ENCODE measurements at regions of chr16 and their contacts with region 1.

Region 1: GRCh38 chr16:15777533-15778203 is 79.2 kb downstream of the MYH11 start:
- DNase-seq: peak; percentile 61
- CTCF ChIP-seq: no peak

Region 2: GRCh38 chr16:15672514-15673167 is 105.0 kb before region 1 on chr16:
- in situ Hi-C with region 1: no loop called
- DNase-seq: no peak
- CTCF ChIP-seq: no peak

Region 3: GRCh38 chr16:15874745-15875314 is 97.2 kb after region 1 on chr16:
- in situ Hi-C with region 1: no loop called
- DNase-seq: no peak
- CTCF ChIP-seq: peak; percentile 42

Region 4: GRCh38 chr16:15949210-15950160 is 171.8 kb after region 1 on chr16 and contains the start of gene ABCC1:
- in situ Hi-C with region 1: no loop called
- DNase-seq: peak; percentile 90
- CTCF ChIP-seq: no peak

Region 5: GRCh38 chr16:16137056-16137455 is 359.4 kb after region 1 on chr16:
- in situ Hi-C with region 1: loop called (anchors 10 kb)
- DNase-seq: no peak
- CTCF ChIP-seq: no peak

Region 6: DNA sequence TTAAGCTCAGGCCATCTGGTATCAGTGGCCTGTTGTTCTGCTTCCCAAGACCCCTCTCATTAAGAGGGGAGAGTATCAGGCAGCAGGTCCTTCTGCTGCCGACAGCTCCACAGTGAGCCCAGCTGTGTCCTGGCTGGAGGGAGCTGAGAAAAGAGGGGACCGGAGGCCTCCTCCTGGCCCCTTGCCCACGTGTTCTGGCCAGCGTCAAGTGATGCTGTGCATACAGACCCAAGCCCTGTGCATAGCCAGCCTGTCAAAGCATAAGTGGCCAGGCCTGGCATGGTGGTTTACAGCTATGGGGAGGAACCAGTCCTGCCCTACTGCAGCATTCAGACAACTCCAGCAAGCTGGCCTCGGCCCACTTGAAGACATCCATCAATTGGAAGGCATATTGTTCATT is 397.6 kb after region 1 on chr16:
- in situ Hi-C with region 1: no loop called
- DNase-seq: no peak
- CTCF ChIP-seq: no peak

Region 7: GRCh38 chr16:16191493-16192167 is 414.0 kb after region 1 on chr16:
- in situ Hi-C with region 1: loop called (anchors 10 kb)
- DNase-seq: no peak
- CTCF ChIP-seq: no peak

Measured in GM13976 (cell line).